Mammary epithelial cell (primary cell): ENCODE measurements at regions of chr11 and their contacts with region 1.

Region 1: GRCh38 chr11:80054582-80055165 is 613.8 kb upstream of the TENM4 start:
- DNase-seq: no peak
- H3K4me3 ChIP-seq: no peak overlapping the region
- H3K27ac ChIP-seq: no peak overlapping the region
- H3K4me1 ChIP-seq: no peaks in the 10 kb centered on the region
- H3K27me3 ChIP-seq: no peaks in the 10 kb centered on the region
- CTCF ChIP-seq: no peak

Region 2: DNA sequence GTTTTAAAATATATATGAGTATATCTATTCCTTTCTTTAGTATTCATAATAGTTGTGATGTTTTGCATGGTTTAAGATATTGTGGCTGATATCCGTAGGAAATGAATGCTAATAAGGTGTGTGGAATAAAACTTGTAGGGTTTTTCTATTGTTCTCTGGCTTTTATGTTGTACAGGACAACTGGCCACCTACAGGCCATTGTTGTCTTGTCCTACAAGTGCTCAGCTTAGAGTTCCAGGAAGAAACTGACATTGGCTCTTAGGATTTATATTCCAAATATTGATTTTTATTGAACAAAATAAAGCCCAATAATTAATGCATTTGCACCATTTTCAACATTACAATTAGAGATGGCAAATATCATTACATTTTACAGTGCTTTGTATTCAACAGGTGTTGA is 101.0 kb before region 1 on chr11:
- CTCF ChIA-PET with region 1: no interaction called
- dilution Hi-C with region 1: loop called (anchors 5 kb)
- in situ Hi-C with region 1: no loop called
- intact Hi-C with region 1: no loop called
- DNase-seq: no peak
- H3K4me3 ChIP-seq: no peak overlapping the region
- H3K27ac ChIP-seq: no peak overlapping the region
- H3K4me1 ChIP-seq: no peaks in the 10 kb centered on the region
- H3K27me3 ChIP-seq: no peaks in the 10 kb centered on the region
- CTCF ChIP-seq: peak in 1 of 2 donors; percentile 23